Psoas muscle (tissue), 8 donors: ENCODE measurements at regions of chr15 and their contacts with region 1.

Region 1: GRCh38 chr15:57866149-57866736 is 159.7 kb downstream of the POLR2M start:
- DNase-seq: peak; percentile 44 to 59
- ATAC-seq: peak in 1 of 4 donors; percentile 36
- H3K4me3 ChIP-seq: no peak overlapping the region
- H3K27ac ChIP-seq: no peak overlapping the region
- H3K4me1 ChIP-seq: no peaks in the 10 kb centered on the region
- H3K27me3 ChIP-seq: no peaks in the 10 kb centered on the region
- CTCF ChIP-seq: peak; percentile 53

Region 2: GRCh38 chr15:57675481-57676181 is 190.6 kb before region 1 on chr15:
- intact Hi-C with region 1: loop called in 1 of 2 experiments (anchors 10 kb)
- DNase-seq: no peak
- ATAC-seq: no peak
- H3K4me3 ChIP-seq: no peak overlapping the region
- H3K27ac ChIP-seq: no peak overlapping the region
- H3K4me1 ChIP-seq: no peaks in the 10 kb centered on the region
- H3K27me3 ChIP-seq: no peaks in the 10 kb centered on the region
- CTCF ChIP-seq: no peak

Region 3: DNA sequence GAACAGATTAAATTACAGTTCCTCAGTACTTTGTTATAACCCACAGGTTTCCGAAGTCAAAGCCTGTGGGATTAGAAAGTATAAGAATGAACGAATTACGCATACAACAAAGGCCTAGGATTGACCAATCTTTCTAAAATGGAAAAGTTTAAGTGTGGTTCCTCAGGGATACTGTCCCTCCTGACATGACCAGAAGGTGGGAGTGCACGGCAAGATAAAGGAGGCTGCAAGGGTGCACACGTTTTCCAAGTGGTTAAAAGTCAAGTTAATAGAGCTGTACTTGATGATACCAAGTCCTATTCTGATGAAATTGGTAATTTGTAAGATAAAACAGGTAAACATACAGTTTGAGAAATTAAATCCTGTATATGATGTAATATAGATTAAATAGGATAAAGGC is 103.1 kb after region 1 on chr15:
- intact Hi-C with region 1: no loop called
- DNase-seq: no peak
- ATAC-seq: no peak
- H3K4me3 ChIP-seq: no peak overlapping the region
- H3K27ac ChIP-seq: no peak overlapping the region
- H3K4me1 ChIP-seq: no peaks in the 10 kb centered on the region
- H3K27me3 ChIP-seq: no peaks in the 10 kb centered on the region
- CTCF ChIP-seq: no peak